AG04449 (cell line): ENCODE measurements at regions of chr19 and their contacts with region 1.

Region 1: DNA sequence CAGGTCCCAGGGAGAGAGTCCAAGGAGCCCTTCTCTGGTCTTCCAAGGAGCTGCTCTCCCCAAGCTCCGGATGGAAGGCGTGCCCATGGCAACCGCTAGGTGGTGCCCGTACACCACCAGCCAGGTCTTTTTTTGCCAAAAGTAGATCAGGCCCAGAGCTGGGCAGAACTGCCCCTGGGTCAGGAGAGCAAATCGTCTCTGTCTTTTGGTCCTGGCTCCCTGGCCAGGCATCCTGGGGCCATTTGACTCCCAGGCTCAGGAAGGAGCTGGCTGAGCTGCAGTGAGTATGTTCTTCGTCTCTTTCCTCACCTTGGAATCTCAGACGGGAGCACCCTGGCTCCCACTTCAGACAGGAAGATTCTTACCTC is 24.6 kb upstream of the BCL3 start:
- DNase-seq: no peak
- H3K4me3 ChIP-seq: no peak overlapping the region
- CTCF ChIP-seq: peak; percentile 97

Region 2: DNA sequence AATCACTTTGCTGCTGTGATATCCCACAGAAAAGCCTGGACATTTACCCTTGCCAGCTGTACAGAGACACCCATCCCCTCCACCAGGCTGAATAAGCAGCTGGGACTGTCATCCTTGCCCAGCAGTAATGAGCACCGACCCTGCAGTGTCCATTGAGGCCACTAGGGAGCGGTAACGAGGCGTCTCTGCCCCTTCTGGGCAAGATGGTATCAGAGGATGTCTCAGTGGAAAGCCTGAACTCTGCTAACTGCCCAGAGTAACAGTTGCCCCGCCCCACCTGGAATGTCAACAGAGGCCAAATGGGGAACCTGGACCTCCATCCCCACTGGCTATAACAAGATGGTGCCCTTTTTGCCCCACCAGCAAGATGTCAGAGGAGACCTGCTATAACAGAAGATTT is 171.6 kb before region 1 on chr19:
- CTCF ChIA-PET with region 1: no interaction called
- POLR2A ChIA-PET with region 1: no interaction called
- DNase-seq: no peak
- H3K4me3 ChIP-seq: no peak overlapping the region
- CTCF ChIP-seq: peak; percentile 46

Region 3: GRCh38 chr19:44587963-44588770 is 135.8 kb before region 1 on chr19:
- CTCF ChIA-PET with region 1: interaction called, 21 read pairs
- POLR2A ChIA-PET with region 1: no interaction called
- DNase-seq: peak; percentile 89
- H3K4me3 ChIP-seq: no peak overlapping the region
- CTCF ChIP-seq: peak; percentile 38

Region 4: GRCh38 chr19:44635581-44636438 is 88.1 kb before region 1 on chr19:
- CTCF ChIA-PET with region 1: no interaction called
- POLR2A ChIA-PET with region 1: no interaction called
- DNase-seq: no peak
- H3K4me3 ChIP-seq: no peak overlapping the region
- CTCF ChIP-seq: no peak

Region 5: GRCh38 chr19:44707794-44708193 is 16.1 kb before region 1 on chr19:
- CTCF ChIA-PET with region 1: interaction called, 38 read pairs
- POLR2A ChIA-PET with region 1: no interaction called
- DNase-seq: no peak
- H3K4me3 ChIP-seq: no peak overlapping the region
- CTCF ChIP-seq: no peak

Region 6: DNA sequence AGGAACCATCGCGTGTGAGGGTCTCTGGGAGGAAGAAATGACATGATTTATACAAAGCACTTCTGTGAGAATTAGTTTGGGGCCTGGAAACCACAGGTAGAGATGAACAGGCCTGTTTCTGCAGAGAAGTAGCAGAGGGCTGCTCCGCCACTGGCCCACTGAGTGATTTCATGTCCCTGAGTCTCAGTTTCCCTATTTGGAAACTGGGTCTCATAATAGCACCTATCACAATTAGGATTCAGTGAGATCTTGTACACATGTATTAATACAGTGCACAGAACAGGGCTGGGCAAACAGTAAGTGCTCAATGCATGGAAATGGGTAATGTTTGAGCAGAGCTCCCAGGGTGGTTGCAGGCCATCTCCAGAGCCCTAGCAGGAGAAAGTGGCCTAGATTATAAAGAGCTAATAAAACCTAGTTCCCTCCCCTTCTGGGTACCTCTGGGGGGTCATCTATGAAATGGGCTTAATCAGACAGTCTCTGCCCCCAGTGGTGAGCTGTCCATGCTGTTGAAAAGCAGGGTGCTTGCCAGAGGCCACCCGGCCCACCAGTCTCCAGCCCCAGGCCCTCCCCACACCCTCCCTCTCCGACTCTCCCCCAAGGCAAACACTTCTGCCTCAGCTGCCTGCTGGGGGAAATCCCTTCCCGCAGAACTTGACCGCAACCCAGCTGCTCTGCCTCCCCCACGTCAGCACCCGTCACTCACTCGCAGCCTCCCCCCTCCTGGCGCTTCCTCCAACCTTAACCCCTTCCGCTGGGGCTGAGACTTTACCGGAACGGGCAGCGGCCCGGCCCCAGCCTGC is 29.1 kb after region 1 on chr19:
- CTCF ChIA-PET with region 1: interaction called, 50 read pairs
- POLR2A ChIA-PET with region 1: interaction called, 4 read pairs
- DNase-seq: peak; percentile 89
- H3K4me3 ChIP-seq: peak overlapping the region; percentile 53
- CTCF ChIP-seq: peak; percentile 12

Region 7: DNA sequence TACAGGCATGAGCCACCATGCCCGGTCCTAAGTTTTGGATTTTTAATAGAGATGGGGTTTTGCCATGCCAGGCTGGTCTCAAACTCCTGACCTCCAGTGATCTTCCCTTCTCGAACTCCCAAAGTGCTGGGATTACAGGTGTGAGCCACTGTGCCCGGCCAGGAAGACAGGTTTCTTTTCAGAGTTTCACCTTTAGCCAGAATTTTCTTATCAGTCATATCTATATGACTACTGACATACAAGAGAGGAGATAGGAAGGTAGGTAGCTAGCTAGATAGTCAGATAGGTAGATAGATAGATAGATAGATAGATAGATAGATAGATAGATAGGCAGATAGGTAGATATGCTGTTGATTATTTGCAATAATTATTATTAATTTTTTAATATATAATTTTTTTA is 61.3 kb after region 1 on chr19:
- CTCF ChIA-PET with region 1: interaction called, 136 read pairs
- POLR2A ChIA-PET with region 1: no interaction called
- DNase-seq: no peak
- H3K4me3 ChIP-seq: no peak overlapping the region
- CTCF ChIP-seq: no peak

Region 8: GRCh38 chr19:44808463-44809371 is 84.8 kb after region 1 on chr19 and contains the start of gene BCAM:
- CTCF ChIA-PET with region 1: interaction called, 33 read pairs
- POLR2A ChIA-PET with region 1: no interaction called
- DNase-seq: no peak
- H3K4me3 ChIP-seq: peak within 1 kb of the TSS; percentile 64
- CTCF ChIP-seq: no peak

Region 9: DNA sequence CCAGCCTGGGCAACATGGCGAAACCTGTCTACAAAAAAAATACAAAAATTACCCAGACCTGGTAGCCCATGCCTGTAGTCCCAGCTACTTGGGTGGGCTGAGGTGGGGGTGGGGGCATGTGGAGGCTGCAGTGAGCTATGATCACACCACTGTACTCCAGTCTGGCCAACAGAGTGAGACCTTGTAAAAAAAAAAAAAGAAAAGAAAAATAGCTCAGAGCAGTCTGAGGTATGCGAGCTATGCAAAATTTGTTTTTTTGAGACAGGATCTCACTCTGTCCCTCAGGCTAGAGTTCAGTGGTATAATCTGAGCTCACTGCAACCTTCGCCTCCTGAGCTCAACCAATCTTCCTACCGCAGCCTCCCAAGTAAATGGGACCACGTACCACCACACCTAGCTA is 160.0 kb after region 1 on chr19:
- CTCF ChIA-PET with region 1: interaction called, 10 read pairs
- POLR2A ChIA-PET with region 1: no interaction called
- DNase-seq: no peak
- H3K4me3 ChIP-seq: no peak overlapping the region
- CTCF ChIP-seq: no peak